ENCODE measurements at regions of chr10 and their contacts with region 1.

Region 1: GRCh38 chr10:3107426-3107961 is 40.1 kb downstream of the PFKP start:
- DNase-seq: peak in 1 of 2 experiments; percentile 74
- H3K4me3 ChIP-seq: no peak overlapping the region
- H3K27ac ChIP-seq: no peak overlapping the region
- H3K4me1 ChIP-seq: no peaks in the 10 kb centered on the region
- H3K27me3 ChIP-seq: no peaks in the 10 kb centered on the region
- CTCF ChIP-seq: no peak

Region 2: GRCh38 chr10:3095373-3096139 is 11.9 kb before region 1 on chr10:
- CTCF ChIA-PET with region 1: no interaction called
- POLR2A ChIA-PET with region 1: interaction called, 5 read pairs
- intact Hi-C with region 1: loop called (anchors 1 kb)
- DNase-seq: peak; percentile 68 to 98
- H3K4me3 ChIP-seq: peak overlapping the region; percentile 25; the same call in 1 of the 2 replicates
- H3K27ac ChIP-seq: peak overlapping the region; percentile 99
- H3K4me1 ChIP-seq: peaks cover 54% of the 10 kb centered on the region
- H3K27me3 ChIP-seq: no peaks in the 10 kb centered on the region
- CTCF ChIP-seq: no peak

Region 3: DNA sequence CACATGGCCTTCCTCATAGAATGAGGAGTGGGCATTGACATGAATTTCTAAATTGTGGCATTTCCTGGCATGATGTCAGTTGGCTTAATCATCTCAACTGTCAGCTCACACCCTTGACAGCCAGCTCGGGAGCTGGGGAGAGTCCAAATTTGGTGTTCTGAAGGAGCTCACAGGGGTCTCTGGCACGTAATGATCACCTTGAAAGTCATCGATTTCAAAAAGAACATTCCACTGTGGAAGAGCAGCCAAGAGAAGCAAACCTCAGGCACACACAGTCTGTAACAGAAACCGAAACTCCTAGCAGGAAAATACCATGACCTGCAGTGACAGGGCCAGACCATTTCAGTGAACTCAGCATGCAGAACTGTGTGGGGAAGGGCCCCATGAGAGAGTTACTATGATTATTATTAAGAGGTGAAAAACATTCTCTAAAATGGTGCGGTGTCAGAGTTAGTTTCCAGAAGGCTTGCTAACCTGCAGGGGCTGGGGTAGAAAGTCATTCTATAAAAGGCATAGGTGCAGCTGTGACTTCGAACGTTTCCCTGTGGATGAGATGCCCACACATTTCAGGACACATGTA is 703.9 kb after region 1 on chr10:
- CTCF ChIA-PET with region 1: no interaction called
- POLR2A ChIA-PET with region 1: no interaction called
- intact Hi-C with region 1: no loop called
- DNase-seq: peak in 1 of 2 experiments; percentile 35
- H3K4me3 ChIP-seq: no peak overlapping the region; the same call in 1 of the 2 replicates
- H3K27ac ChIP-seq: peak overlapping the region; percentile 96
- H3K4me1 ChIP-seq: peaks cover 53% of the 10 kb centered on the region
- H3K27me3 ChIP-seq: no peaks in the 10 kb centered on the region
- CTCF ChIP-seq: no peak

Measured in PC-9 (cell line).